ENCODE measurements at regions of chr18 and their contacts with region 1.

Region 1: GRCh38 chr18:36284671-36285295 is 12.7 kb upstream of the FHOD3 start:
- DNase-seq: peak; percentile 51 to 78 (median 54)
- ATAC-seq: peak; percentile 72
- H3K4me3 ChIP-seq: no peak overlapping the region
- H3K27ac ChIP-seq: no peak overlapping the region
- H3K4me1 ChIP-seq: no peaks in the 10 kb centered on the region
- H3K27me3 ChIP-seq: peaks cover 3 to 17% of the 10 kb centered on the region in 2 experiments; a peak in 3 of 5 replicates
- CTCF ChIP-seq: peak; percentile 84 to 98 (median 84)
- EP300 ChIP-seq: no peak
- POLR2A ChIP-seq: no peak
- RAD21 ChIP-seq: peak; percentile 98 to 100

Region 2: DNA sequence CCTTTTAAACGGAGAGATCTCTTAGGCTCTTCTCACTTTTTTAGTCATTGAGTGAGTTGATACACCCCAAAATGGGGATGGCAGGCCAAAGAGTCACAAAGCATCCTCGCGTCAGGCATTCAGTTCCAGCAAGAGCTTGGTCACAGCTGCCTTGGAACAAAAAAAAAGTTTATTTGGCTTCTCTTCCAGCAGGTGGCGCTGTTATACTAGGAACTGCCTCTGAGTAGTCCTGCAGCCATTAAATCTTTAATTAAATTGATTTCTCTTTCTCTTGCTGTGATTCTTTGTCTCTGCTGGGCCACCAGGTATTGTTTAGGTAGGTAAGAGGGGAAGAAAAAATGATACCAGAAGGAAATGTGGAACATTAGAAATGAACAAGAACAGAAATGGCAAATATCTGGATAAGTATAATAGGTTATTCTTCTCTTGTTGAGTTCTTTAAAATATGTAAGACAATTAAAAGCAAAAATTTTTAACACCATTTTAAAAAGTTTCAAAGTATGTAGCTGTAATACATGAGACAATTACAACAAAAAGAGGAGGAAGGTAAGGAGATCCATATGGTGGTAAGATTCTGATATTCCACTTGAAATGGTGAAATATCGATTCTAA is 528.2 kb before region 1 on chr18:
- CTCF ChIA-PET with region 1: interaction called, 17 read pairs
- POLR2A ChIA-PET with region 1: interaction called, 3 read pairs
- in situ Hi-C with region 1: loop called (anchors 5 kb)
- intact Hi-C with region 1: loop called (anchors 2 kb)
- DNase-seq: peak; percentile 59 to 72 (median 67)
- ATAC-seq: peak; percentile 92
- H3K4me3 ChIP-seq: no peak overlapping the region
- H3K27ac ChIP-seq: no peak overlapping the region
- H3K4me1 ChIP-seq: no peaks in the 10 kb centered on the region
- H3K27me3 ChIP-seq: peaks cover 11 to 32% of the 10 kb centered on the region in 2 experiments
- CTCF ChIP-seq: peak; percentile 72 to 89 (median 75)
- EP300 ChIP-seq: no peak
- POLR2A ChIP-seq: no peak
- RAD21 ChIP-seq: peak; percentile 93 to 95

Region 3: DNA sequence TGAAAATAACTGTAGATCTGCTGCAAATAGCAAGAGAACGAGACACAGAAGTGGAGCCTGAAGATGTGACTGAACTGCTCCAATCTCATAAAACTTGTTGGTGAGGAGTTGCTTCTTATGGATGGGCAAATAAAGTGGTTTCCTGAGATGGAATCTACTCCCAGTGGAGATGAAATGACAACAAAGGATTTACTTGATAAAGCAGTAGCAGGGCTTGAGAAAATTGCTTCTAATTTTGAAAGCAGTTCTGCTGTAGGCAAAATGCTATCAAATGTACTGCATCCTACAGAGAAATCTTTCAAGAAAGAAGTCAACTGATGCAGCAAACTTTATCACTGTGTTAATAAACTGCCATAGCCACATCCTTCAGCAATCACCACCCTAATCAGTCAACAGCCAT is 261.4 kb before region 1 on chr18:
- CTCF ChIA-PET with region 1: interaction called, 36 read pairs
- POLR2A ChIA-PET with region 1: no interaction called
- in situ Hi-C with region 1: loop called (anchors 5 kb)
- intact Hi-C with region 1: no loop called
- DNase-seq: no peak
- ATAC-seq: no peak
- H3K4me3 ChIP-seq: no peak overlapping the region
- H3K27ac ChIP-seq: no peak overlapping the region
- H3K4me1 ChIP-seq: no peaks in the 10 kb centered on the region
- H3K27me3 ChIP-seq: no peaks in the 10 kb centered on the region
- CTCF ChIP-seq: no peak
- EP300 ChIP-seq: no peak
- POLR2A ChIP-seq: no peak
- RAD21 ChIP-seq: no peak

Region 4: GRCh38 chr18:36101943-36102342 is 182.8 kb before region 1 on chr18:
- CTCF ChIA-PET with region 1: interaction called, 74 read pairs
- POLR2A ChIA-PET with region 1: no interaction called
- in situ Hi-C with region 1: loop called (anchors 5 kb)
- intact Hi-C with region 1: no loop called
- DNase-seq: peak in 1 of 4 experiments; percentile 14
- ATAC-seq: peak; percentile 44
- H3K4me3 ChIP-seq: no peak overlapping the region
- H3K27ac ChIP-seq: no peak overlapping the region
- H3K4me1 ChIP-seq: no peaks in the 10 kb centered on the region; a peak in 1 of 5 replicates
- H3K27me3 ChIP-seq: peaks cover 0 to 4% of the 10 kb centered on the region in 2 experiments; a peak in 1 of 5 replicates
- CTCF ChIP-seq: no peak
- EP300 ChIP-seq: no peak
- POLR2A ChIP-seq: no peak
- RAD21 ChIP-seq: no peak

Region 5: GRCh38 chr18:36241831-36242230 is 43.0 kb before region 1 on chr18:
- CTCF ChIA-PET with region 1: no interaction called
- POLR2A ChIA-PET with region 1: no interaction called
- in situ Hi-C with region 1: no loop called
- intact Hi-C with region 1: no loop called
- DNase-seq: no peak
- ATAC-seq: no peak
- H3K4me3 ChIP-seq: no peak overlapping the region
- H3K27ac ChIP-seq: no peak overlapping the region
- H3K4me1 ChIP-seq: no peaks in the 10 kb centered on the region
- H3K27me3 ChIP-seq: no peaks in the 10 kb centered on the region
- CTCF ChIP-seq: no peak
- EP300 ChIP-seq: no peak
- POLR2A ChIP-seq: no peak
- RAD21 ChIP-seq: no peak

Region 6: GRCh38 chr18:36271153-36271552 is 13.6 kb before region 1 on chr18:
- CTCF ChIA-PET with region 1: no interaction called
- POLR2A ChIA-PET with region 1: interaction called, 10 read pairs
- in situ Hi-C with region 1: no loop called
- intact Hi-C with region 1: no loop called
- DNase-seq: no peak
- ATAC-seq: no peak
- H3K4me3 ChIP-seq: no peak overlapping the region
- H3K27ac ChIP-seq: no peak overlapping the region
- H3K4me1 ChIP-seq: no peaks in the 10 kb centered on the region
- H3K27me3 ChIP-seq: no peaks in the 10 kb centered on the region
- CTCF ChIP-seq: no peak
- EP300 ChIP-seq: no peak
- POLR2A ChIP-seq: no peak
- RAD21 ChIP-seq: no peak

Measured in K562 (cell line).